PC-3 (cell line): ENCODE measurements at regions of chr10 and their contacts with region 1.

Region 1: GRCh38 chr10:79202188-79203013 is 133.6 kb downstream of the ZMIZ1 start:
- DNase-seq: peak; percentile 89
- ATAC-seq: peak; percentile 79
- H3K4me3 ChIP-seq: no peak overlapping the region
- H3K27ac ChIP-seq: no peak overlapping the region
- H3K4me1 ChIP-seq: no peaks in the 10 kb centered on the region
- H3K27me3 ChIP-seq: no peaks in the 10 kb centered on the region
- CTCF ChIP-seq: peak; percentile 100

Region 2: GRCh38 chr10:79073784-79074432 is 128.5 kb before region 1 on chr10:
- CTCF ChIA-PET with region 1: interaction called, 12 read pairs
- POLR2A ChIA-PET with region 1: no interaction called
- intact Hi-C with region 1: no loop called
- DNase-seq: peak; percentile 71
- ATAC-seq: no peak
- H3K4me3 ChIP-seq: no peak overlapping the region
- H3K27ac ChIP-seq: no peak overlapping the region
- H3K4me1 ChIP-seq: peaks cover 46% of the 10 kb centered on the region
- H3K27me3 ChIP-seq: no peaks in the 10 kb centered on the region
- CTCF ChIP-seq: no peak

Region 3: GRCh38 chr10:79220307-79220706 is 17.9 kb after region 1 on chr10:
- CTCF ChIA-PET with region 1: interaction called, 4 read pairs
- POLR2A ChIA-PET with region 1: interaction called, 17 read pairs
- intact Hi-C with region 1: no loop called
- DNase-seq: no peak
- ATAC-seq: peak; percentile 8
- H3K4me3 ChIP-seq: no peak overlapping the region
- H3K27ac ChIP-seq: no peak overlapping the region
- H3K4me1 ChIP-seq: no peaks in the 10 kb centered on the region
- H3K27me3 ChIP-seq: no peaks in the 10 kb centered on the region
- CTCF ChIP-seq: no peak

Region 4: GRCh38 chr10:79230328-79230830 is 28.0 kb after region 1 on chr10:
- CTCF ChIA-PET with region 1: no interaction called
- POLR2A ChIA-PET with region 1: no interaction called
- intact Hi-C with region 1: no loop called
- DNase-seq: no peak
- ATAC-seq: no peak
- H3K4me3 ChIP-seq: no peak overlapping the region
- H3K27ac ChIP-seq: no peak overlapping the region
- H3K4me1 ChIP-seq: peaks cover 18% of the 10 kb centered on the region
- H3K27me3 ChIP-seq: no peaks in the 10 kb centered on the region
- CTCF ChIP-seq: no peak